SK-N-SH (cell line): ENCODE measurements at regions of chr18 and their contacts with region 1.

Region 1: DNA sequence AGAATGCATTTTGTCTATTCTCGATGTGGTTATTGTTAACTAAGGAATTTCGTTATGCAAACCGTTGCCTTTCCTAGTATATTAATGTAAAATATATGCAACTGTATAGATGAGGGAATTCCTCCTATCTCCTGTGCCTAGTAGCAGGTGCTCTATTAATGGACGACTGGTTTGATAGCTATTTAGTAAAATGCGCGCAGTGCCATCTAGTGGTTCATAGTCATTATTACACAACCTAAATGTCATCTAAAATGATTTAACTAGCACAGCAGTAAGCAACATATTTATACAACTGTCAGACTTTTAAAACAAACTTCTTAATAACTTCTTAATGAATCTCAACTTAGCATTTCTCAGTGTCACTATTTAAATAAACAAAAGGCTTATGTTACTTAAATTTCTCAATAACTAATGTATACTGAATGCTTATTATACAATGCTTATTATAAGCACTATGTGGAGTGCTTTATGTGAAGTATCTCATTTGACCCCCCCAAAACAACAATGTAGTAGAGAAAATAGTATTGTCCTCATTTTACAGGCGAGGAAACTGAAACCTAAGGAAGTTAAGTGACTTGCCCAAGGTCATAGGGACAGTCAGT is 77.9 kb downstream of the DTNA start:
- DNase-seq: peak; percentile 53
- H3K4me3 ChIP-seq: no peak overlapping the region; a peak in 1 of 4 replicates
- H3K27ac ChIP-seq: no peak overlapping the region
- H3K4me1 ChIP-seq: 0 out of 4 replicates have a peak, but pooled peaks cover 0 to 6% of the 10 kb centered on the region in 2 experiments
- H3K27me3 ChIP-seq: no peaks in the 10 kb centered on the region
- CTCF ChIP-seq: peak; percentile 84
- EP300 ChIP-seq: no peak
- RAD21 ChIP-seq: peak; percentile 94

Region 2: GRCh38 chr18:34624551-34624950 is 163.5 kb before region 1 on chr18:
- CTCF ChIA-PET with region 1: no interaction called
- POLR2A ChIA-PET with region 1: no interaction called
- DNase-seq: no peak
- H3K4me3 ChIP-seq: no peak overlapping the region
- H3K27ac ChIP-seq: no peak overlapping the region
- H3K4me1 ChIP-seq: no peaks in the 10 kb centered on the region; a peak in 2 of 4 replicates
- H3K27me3 ChIP-seq: no peaks in the 10 kb centered on the region
- CTCF ChIP-seq: no peak
- EP300 ChIP-seq: no peak
- RAD21 ChIP-seq: no peak

Region 3: GRCh38 chr18:34773961-34774766 is 13.9 kb before region 1 on chr18:
- CTCF ChIA-PET with region 1: interaction called, 15 read pairs
- POLR2A ChIA-PET with region 1: no interaction called
- DNase-seq: peak; percentile 54
- H3K4me3 ChIP-seq: no peak overlapping the region
- H3K27ac ChIP-seq: peak overlapping the region; percentile 1 to 16; a peak in 2 of 4 replicates
- H3K4me1 ChIP-seq: peaks cover 7 to 13% of the 10 kb centered on the region in 2 experiments; a peak in 3 of 4 replicates
- H3K27me3 ChIP-seq: no peaks in the 10 kb centered on the region
- CTCF ChIP-seq: no peak
- EP300 ChIP-seq: peak; percentile 15 to 66; a peak in 2 of 4 replicates
- RAD21 ChIP-seq: no peak